ENCODE measurements at regions of chr9 and their contacts with region 1.

Region 1: DNA sequence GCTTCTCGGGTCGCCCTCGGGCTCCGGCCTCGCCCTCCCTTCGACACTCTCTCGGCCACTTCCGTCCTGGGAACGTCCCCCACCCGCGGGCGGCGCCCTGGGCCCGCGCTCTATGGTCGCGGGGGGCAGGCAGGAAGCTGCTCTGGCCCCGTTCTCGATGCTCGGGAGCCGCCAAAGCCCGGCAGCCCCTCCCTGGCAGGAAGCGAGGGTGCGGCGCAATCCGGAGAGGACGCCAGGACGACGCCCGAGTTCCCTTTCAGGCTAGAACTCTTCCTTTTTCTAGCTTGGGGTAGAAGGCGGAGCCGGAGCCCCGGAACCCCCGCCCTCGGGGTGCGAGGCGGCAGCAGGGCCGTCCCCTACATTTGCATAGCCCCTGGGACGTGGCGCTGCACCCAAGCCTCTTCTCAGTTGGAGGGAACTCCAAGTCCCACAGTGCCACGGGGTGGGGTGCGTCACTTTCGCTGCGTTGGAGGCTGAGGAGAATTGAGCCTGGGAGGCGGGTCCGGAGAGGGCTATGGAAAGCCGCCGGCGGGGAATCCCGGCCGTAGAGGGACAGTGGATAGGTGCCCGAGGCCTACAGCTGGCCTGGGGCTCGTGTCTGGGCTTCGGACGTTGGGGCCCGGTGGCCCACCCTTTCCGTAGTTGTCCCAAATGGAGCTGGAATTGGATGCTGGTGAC is at the starts of genes CREB3 and TLN1:
- DNase-seq: peak; percentile 98
- H3K4me3 Mint-ChIP-seq: peak within 1 kb of the TSS; percentile 84
- H3K27ac Mint-ChIP-seq: peak within 1 kb of the TSS; percentile 90
- H3K4me1 Mint-ChIP-seq: peaks cover 16% of the 10 kb centered on the region
- H3K27me3 Mint-ChIP-seq: no peaks in the 10 kb centered on the region
- total RNA-seq, gene CREB3: 13.7 to 13.8 TPM
- total RNA-seq, gene TLN1: 190 TPM

Region 2: GRCh38 chr9:35111001-35111933 is 621.0 kb before region 1 on chr9:
- CTCF ChIA-PET with region 1: interaction called, 3 read pairs
- intact Hi-C with region 1: loop called (anchors 1 kb)
- DNase-seq: peak; percentile 97
- H3K4me3 Mint-ChIP-seq: peak overlapping the region; percentile 56
- H3K27ac Mint-ChIP-seq: peak overlapping the region; percentile 88
- H3K4me1 Mint-ChIP-seq: peaks cover 44% of the 10 kb centered on the region
- H3K27me3 Mint-ChIP-seq: no peaks in the 10 kb centered on the region

Region 3: GRCh38 chr9:35646533-35647265 is 85.6 kb before region 1 on chr9:
- CTCF ChIA-PET with region 1: interaction called, 9 read pairs
- intact Hi-C with region 1: loop called (anchors 1 kb)
- DNase-seq: peak; percentile 94
- H3K4me3 Mint-ChIP-seq: peak overlapping the region; percentile 90
- H3K27ac Mint-ChIP-seq: peak overlapping the region; percentile 83
- H3K4me1 Mint-ChIP-seq: peaks cover 43% of the 10 kb centered on the region
- H3K27me3 Mint-ChIP-seq: no peaks in the 10 kb centered on the region

Region 4: GRCh38 chr9:35690431-35691333 is 41.6 kb before region 1 on chr9:
- CTCF ChIA-PET with region 1: interaction called, 68 read pairs
- intact Hi-C with region 1: loop called (anchors 2 kb)
- DNase-seq: peak; percentile 43
- H3K4me3 Mint-ChIP-seq: peak overlapping the region; percentile 78
- H3K27ac Mint-ChIP-seq: no peak overlapping the region
- H3K4me1 Mint-ChIP-seq: peaks cover 18% of the 10 kb centered on the region
- H3K27me3 Mint-ChIP-seq: no peaks in the 10 kb centered on the region

Region 5: GRCh38 chr9:35756275-35757225 is 24.3 kb after region 1 on chr9:
- CTCF ChIA-PET with region 1: interaction called, 32 read pairs
- intact Hi-C with region 1: loop called (anchors 1 kb)
- DNase-seq: peak; percentile 92
- H3K4me3 Mint-ChIP-seq: peak overlapping the region; percentile 94
- H3K27ac Mint-ChIP-seq: peak overlapping the region; percentile 95
- H3K4me1 Mint-ChIP-seq: peaks cover 33% of the 10 kb centered on the region
- H3K27me3 Mint-ChIP-seq: no peaks in the 10 kb centered on the region

Region 6: DNA sequence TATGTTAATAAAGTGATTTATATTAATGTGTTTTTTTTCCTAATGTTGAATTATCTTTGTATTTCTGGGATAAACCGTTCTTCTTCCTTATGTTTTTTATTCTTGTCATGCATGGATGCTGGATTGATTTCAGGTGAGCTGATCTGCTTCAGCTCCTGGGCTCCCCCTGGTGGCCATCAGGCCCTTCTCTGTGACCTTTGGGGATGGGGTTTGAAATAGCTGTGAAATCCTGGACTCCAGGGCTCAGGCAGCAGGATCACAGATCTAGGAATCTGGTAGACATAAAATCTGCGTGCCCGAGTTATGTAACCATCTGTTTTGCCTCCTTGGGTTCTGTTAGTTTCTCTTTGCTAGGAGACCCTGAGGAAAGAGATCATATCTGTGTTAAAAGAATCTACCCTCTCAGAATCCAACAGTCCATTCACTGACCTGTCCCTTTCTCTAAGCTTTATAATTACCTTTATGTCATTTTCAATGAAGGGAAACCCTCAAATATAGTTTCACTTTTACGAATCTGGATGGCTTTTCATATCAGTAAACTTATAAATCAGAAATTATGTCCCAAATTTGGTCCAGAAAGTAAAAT is 150.1 kb after region 1 on chr9:
- CTCF ChIA-PET with region 1: interaction called, 5 read pairs
- intact Hi-C with region 1: loop called (anchors 1 kb)
- DNase-seq: peak; percentile 89
- H3K4me3 Mint-ChIP-seq: no peak overlapping the region
- H3K27ac Mint-ChIP-seq: no peak overlapping the region
- H3K4me1 Mint-ChIP-seq: no peaks in the 10 kb centered on the region
- H3K27me3 Mint-ChIP-seq: no peaks in the 10 kb centered on the region